Adrenal gland (tissue), 19 donors: ENCODE measurements at regions of chr1 and their contacts with region 1.

Region 1: GRCh38 chr1:220690140-220691025 is at the start of gene C1orf115:
- DNase-seq: peak; percentile 54 to 83 (median 75)
- H3K4me3 ChIP-seq: peak within 1 kb of the TSS in 2 of 4 donors; percentile 42 to 69
- H3K27ac ChIP-seq: peak within 1 kb of the TSS in 1 of 5 donors; percentile 10
- H3K4me1 ChIP-seq: peaks cover 0 to 16% of the 10 kb centered on the region in 2 donors
- H3K27me3 ChIP-seq: no peaks in the 10 kb centered on the region
- CTCF ChIP-seq: peak; percentile 71 to 97 (median 80)
- POLR2A ChIP-seq: peak in 1 of 2 donors; percentile 17
- total RNA-seq, gene C1orf115: 1.1 to 12.7 (median 6.8) TPM

Region 2: DNA sequence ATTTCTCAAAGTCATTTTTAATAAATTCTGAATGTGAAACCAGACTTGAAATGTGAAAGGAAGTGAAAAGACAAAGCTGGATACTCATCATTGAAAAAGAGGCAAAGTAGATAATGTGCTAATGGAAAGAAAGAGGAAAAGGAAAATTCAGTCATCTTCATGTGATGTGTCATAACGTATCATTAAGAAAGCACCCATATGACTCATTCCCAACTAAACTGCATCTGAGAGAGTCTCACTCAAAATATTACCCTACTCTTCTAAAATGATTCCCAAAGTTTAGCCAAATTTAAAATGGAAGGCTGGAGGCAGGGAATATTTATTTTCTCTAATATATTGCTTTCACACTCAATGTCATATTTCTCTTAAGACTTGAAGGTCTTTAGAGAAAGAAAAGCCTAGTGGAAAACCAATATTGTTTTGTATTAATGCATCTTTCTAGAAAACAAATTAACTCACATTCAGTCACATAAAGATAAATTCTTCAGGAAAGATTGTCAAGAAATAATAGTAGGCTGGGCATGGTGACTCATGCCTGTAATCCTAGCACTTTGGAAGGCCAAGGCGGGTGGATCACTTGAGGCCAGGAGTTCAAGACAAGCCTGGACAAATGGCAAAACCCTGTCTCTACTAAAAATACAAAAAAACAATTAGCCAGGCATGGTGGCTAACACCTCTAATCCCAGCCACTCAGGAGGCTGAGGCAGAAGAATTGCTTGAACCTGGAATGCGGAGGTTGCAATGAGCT is 891.9 kb before region 1 on chr1:
- intact Hi-C with region 1: no loop called
- DNase-seq: no peak
- H3K4me3 ChIP-seq: peak overlapping the region in 1 of 4 donors; percentile 14
- H3K27ac ChIP-seq: no peak overlapping the region
- H3K4me1 ChIP-seq: no peaks in the 10 kb centered on the region
- H3K27me3 ChIP-seq: no peaks in the 10 kb centered on the region
- CTCF ChIP-seq: no peak
- POLR2A ChIP-seq: no peak

Region 3: GRCh38 chr1:220733090-220733601 is 42.8 kb after region 1 on chr1:
- intact Hi-C with region 1: loop called in 1 of 2 experiments (anchors 5 kb)
- DNase-seq: peak; percentile 68 to 84 (median 79)
- H3K4me3 ChIP-seq: peak overlapping the region in 1 of 4 donors; percentile 28
- H3K27ac ChIP-seq: peak overlapping the region in 2 of 5 donors; percentile 18 to 52
- H3K4me1 ChIP-seq: peaks cover 0 to 14% of the 10 kb centered on the region in 2 donors
- H3K27me3 ChIP-seq: no peaks in the 10 kb centered on the region
- CTCF ChIP-seq: peak; percentile 71 to 88 (median 86)
- POLR2A ChIP-seq: no peak